ENCODE measurements at regions of chr2 and their contacts with region 1.

Region 1: GRCh38 chr2:221573430-221574230 is 1.5 kb upstream of the EPHA4 start:
- DNase-seq: no peak
- H3K4me3 ChIP-seq: peak overlapping the region; percentile 70 to 83 (median 78)
- H3K27ac ChIP-seq: peak overlapping the region; percentile 82 to 89 (median 85)
- H3K4me1 ChIP-seq: peaks cover 16 to 51% (median 42%) of the 10 kb centered on the region in 4 donors
- H3K27me3 ChIP-seq: peaks cover 0 to 29% (median 6%) of the 10 kb centered on the region in 4 donors
- CTCF ChIP-seq: peak; percentile 95 to 100 (median 99)
- EP300 ChIP-seq: no peak
- POLR2A ChIP-seq: no peak

Region 2: DNA sequence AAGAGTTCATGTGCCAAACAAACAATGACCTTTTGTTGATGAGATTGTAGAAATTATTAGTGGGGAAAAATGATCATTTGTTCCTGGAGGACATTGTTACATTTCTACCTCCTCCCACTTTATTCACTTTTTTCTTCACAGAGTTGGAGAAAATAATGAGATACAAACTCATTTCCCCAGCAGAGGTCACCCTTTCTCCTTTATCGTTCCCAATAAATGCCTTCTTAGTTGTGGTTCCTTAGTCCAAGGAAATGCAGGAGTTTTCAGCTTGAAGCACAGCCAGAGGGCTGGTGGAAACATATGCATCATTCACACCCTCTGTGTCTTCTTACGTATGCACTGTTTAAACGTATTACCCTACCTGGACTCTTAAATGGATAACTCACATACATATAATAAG is 1837.4 kb before region 1 on chr2:
- intact Hi-C with region 1: loop called (anchors 5 kb)
- DNase-seq: peak; percentile 42
- H3K4me3 ChIP-seq: no peak overlapping the region
- H3K27ac ChIP-seq: no peak overlapping the region
- H3K4me1 ChIP-seq: peaks cover 0 to 4% (median 0%) of the 10 kb centered on the region in 4 donors
- H3K27me3 ChIP-seq: peaks cover 0 to 19% (median 0%) of the 10 kb centered on the region in 4 donors
- CTCF ChIP-seq: peak; percentile 29 to 50 (median 40)
- EP300 ChIP-seq: no peak
- POLR2A ChIP-seq: no peak

Region 3: DNA sequence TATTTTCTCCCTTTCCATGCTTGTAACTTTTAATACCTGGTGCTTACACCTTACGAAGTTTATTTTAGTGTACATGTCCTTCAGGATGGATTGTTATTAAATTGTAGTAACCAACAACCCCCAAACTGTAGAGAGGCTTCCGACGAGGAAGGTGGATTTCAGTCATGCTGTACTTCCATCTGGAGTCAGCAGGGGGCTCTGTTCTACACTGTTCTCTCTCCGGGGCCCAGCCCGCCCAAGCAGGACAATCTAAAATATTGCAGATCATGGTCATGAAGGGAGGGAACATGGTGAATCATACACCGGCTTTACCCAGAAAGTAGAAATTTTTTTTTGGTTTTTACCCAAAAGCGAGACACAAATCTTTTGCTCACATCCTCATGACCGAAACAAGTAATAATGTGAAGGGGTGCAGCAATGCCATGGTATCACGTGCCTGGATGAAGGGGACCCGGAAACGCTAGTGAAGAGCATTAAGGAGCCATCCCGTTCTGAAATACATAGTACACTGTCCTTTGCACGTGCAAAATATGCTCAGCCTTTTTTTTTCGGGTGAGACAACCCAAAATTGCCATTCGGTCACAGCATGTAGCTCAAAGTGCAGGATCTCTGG is 886.3 kb before region 1 on chr2:
- intact Hi-C with region 1: loop called (anchors 1 kb)
- DNase-seq: no peak
- H3K4me3 ChIP-seq: no peak overlapping the region
- H3K27ac ChIP-seq: no peak overlapping the region
- H3K4me1 ChIP-seq: peaks cover 0 to 4% (median 1%) of the 10 kb centered on the region in 4 donors
- H3K27me3 ChIP-seq: no peaks in the 10 kb centered on the region
- CTCF ChIP-seq: peak; percentile 84 to 91 (median 84)
- EP300 ChIP-seq: no peak
- POLR2A ChIP-seq: no peak

Region 4: GRCh38 chr2:221104361-221104811 is 469.2 kb before region 1 on chr2:
- intact Hi-C with region 1: loop called (anchors 10 kb)
- DNase-seq: no peak
- H3K4me3 ChIP-seq: peak overlapping the region in 3 of 4 donors; percentile 15 to 31 (median 29)
- H3K27ac ChIP-seq: peak overlapping the region in 2 of 4 donors; percentile 2 to 32
- H3K4me1 ChIP-seq: peaks cover 15 to 22% (median 18%) of the 10 kb centered on the region in 4 donors
- H3K27me3 ChIP-seq: no peaks in the 10 kb centered on the region
- CTCF ChIP-seq: peak in 1 of 3 experiments; percentile 11
- EP300 ChIP-seq: no peak
- POLR2A ChIP-seq: no peak

Region 5: DNA sequence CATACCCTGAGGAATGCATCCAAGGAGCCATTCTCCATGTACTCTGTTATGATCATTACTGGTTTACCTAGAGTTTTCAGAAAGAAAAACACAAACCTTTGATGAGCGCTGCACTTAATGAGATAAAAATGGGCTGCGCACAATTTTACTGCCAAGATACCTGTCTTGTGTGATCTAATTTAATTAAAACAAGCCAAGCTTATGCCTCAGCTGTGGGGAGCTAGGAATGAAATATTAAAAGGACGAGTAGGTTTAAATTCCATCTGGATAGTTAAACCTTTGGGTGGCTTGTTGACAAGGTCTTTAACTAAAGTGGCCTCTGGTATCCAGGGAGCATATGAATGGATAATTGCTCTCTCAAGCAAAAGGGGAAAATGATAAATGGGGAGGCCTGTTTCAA is 136.6 kb before region 1 on chr2:
- intact Hi-C with region 1: loop called (anchors 5 kb)
- DNase-seq: no peak
- H3K4me3 ChIP-seq: no peak overlapping the region
- H3K27ac ChIP-seq: no peak overlapping the region
- H3K4me1 ChIP-seq: peaks cover 0 to 15% (median 12%) of the 10 kb centered on the region in 4 donors
- H3K27me3 ChIP-seq: no peaks in the 10 kb centered on the region
- CTCF ChIP-seq: no peak
- EP300 ChIP-seq: no peak
- POLR2A ChIP-seq: no peak

Region 6: GRCh38 chr2:221969087-221969829 is 395.6 kb after region 1 on chr2:
- intact Hi-C with region 1: loop called (anchors 2 kb)
- DNase-seq: no peak
- H3K4me3 ChIP-seq: no peak overlapping the region
- H3K27ac ChIP-seq: no peak overlapping the region
- H3K4me1 ChIP-seq: peaks cover 0 to 6% (median 5%) of the 10 kb centered on the region in 4 donors
- H3K27me3 ChIP-seq: no peaks in the 10 kb centered on the region
- CTCF ChIP-seq: peak; percentile 67 to 69 (median 68)
- EP300 ChIP-seq: no peak
- POLR2A ChIP-seq: no peak

Measured in esophagus muscularis mucosa (tissue), 4 donors.